ENCODE measurements at regions of chr4 and their contacts with region 1.

Region 1: GRCh38 chr4:41360214-41360920 is 103.6 kb downstream of the UCHL1 start:
- DNase-seq: peak; percentile 86 to 91 (median 89)
- ATAC-seq: peak; percentile 57 to 89 (median 80)
- H3K4me3 ChIP-seq: peak overlapping the region; percentile 70 to 94 (median 86)
- H3K27ac ChIP-seq: peak overlapping the region; percentile 64 to 96 (median 86)
- H3K4me1 ChIP-seq: peaks cover 0 to 54% (median 28%) of the 10 kb centered on the region in 12 donors
- H3K27me3 ChIP-seq: peaks cover 0 to 20% (median 0%) of the 10 kb centered on the region in 9 donors
- CTCF ChIP-seq: no peak
- POLR2A ChIP-seq: peak in 1 of 2 donors; percentile 52

Region 2: GRCh38 chr4:41294445-41295062 is 65.8 kb before region 1 on chr4:
- intact Hi-C with region 1: loop called in 1 of 10 experiments (anchors 5 kb)
- DNase-seq: no peak
- ATAC-seq: no peak
- H3K4me3 ChIP-seq: no peak overlapping the region
- H3K27ac ChIP-seq: no peak overlapping the region
- H3K4me1 ChIP-seq: peaks cover 0 to 13% (median 0%) of the 10 kb centered on the region in 12 donors
- H3K27me3 ChIP-seq: no peaks in the 10 kb centered on the region
- CTCF ChIP-seq: no peak
- POLR2A ChIP-seq: no peak

Region 3: GRCh38 chr4:41418444-41418843 is 58.1 kb after region 1 on chr4:
- intact Hi-C with region 1: loop called in 5 of 10 experiments (anchors 5 to 10 kb)
- DNase-seq: peak; percentile 76 to 88 (median 81)
- ATAC-seq: peak; percentile 92 to 95 (median 94)
- H3K4me3 ChIP-seq: peak overlapping the region in 1 of 12 donors; percentile 11
- H3K27ac ChIP-seq: peak overlapping the region; percentile 19 to 88 (median 64)
- H3K4me1 ChIP-seq: peaks cover 0 to 52% (median 13%) of the 10 kb centered on the region in 12 donors
- H3K27me3 ChIP-seq: no peaks in the 10 kb centered on the region
- CTCF ChIP-seq: no peak
- POLR2A ChIP-seq: no peak

Region 4: GRCh38 chr4:41432881-41433280 is 72.5 kb after region 1 on chr4:
- intact Hi-C with region 1: loop called in 7 of 10 experiments (anchors 5 to 10 kb)
- DNase-seq: no peak
- ATAC-seq: no peak
- H3K4me3 ChIP-seq: no peak overlapping the region
- H3K27ac ChIP-seq: peak overlapping the region in 8 of 12 donors; percentile 2 to 93 (median 68)
- H3K4me1 ChIP-seq: peaks cover 3 to 88% (median 61%) of the 10 kb centered on the region in 12 donors
- H3K27me3 ChIP-seq: no peaks in the 10 kb centered on the region
- CTCF ChIP-seq: no peak
- POLR2A ChIP-seq: no peak

Region 5: GRCh38 chr4:41611881-41612871 is 251.8 kb after region 1 on chr4:
- intact Hi-C with region 1: loop called in 4 of 10 experiments (anchors 5 to 10 kb)
- DNase-seq: peak; percentile 68 to 79 (median 73)
- ATAC-seq: peak; percentile 89 to 93 (median 92)
- H3K4me3 ChIP-seq: peak overlapping the region in 7 of 12 donors; percentile 21 to 52 (median 29)
- H3K27ac ChIP-seq: peak overlapping the region; percentile 7 to 83 (median 68)
- H3K4me1 ChIP-seq: peaks cover 0 to 43% (median 32%) of the 10 kb centered on the region in 12 donors
- H3K27me3 ChIP-seq: no peaks in the 10 kb centered on the region
- CTCF ChIP-seq: peak in 2 of 12 donors; percentile 15 to 22
- POLR2A ChIP-seq: no peak

Region 6: GRCh38 chr4:41661442-41662076 is 301.2 kb after region 1 on chr4:
- intact Hi-C with region 1: loop called in 1 of 10 experiments (anchors 10 kb)
- DNase-seq: peak in 3 of 5 donors; percentile 50 to 59 (median 51)
- ATAC-seq: peak in 3 of 4 donors; percentile 46 to 55 (median 47)
- H3K4me3 ChIP-seq: no peak overlapping the region
- H3K27ac ChIP-seq: peak overlapping the region in 1 of 12 donors; percentile 9
- H3K4me1 ChIP-seq: peaks cover 0 to 23% (median 10%) of the 10 kb centered on the region in 12 donors
- H3K27me3 ChIP-seq: no peaks in the 10 kb centered on the region
- CTCF ChIP-seq: peak; percentile 94 to 99 (median 97)
- POLR2A ChIP-seq: no peak

Measured in heart left ventricle (tissue), 16 donors.